ENCODE measurements at regions of chr12 and their contacts with region 1.

Region 1: DNA sequence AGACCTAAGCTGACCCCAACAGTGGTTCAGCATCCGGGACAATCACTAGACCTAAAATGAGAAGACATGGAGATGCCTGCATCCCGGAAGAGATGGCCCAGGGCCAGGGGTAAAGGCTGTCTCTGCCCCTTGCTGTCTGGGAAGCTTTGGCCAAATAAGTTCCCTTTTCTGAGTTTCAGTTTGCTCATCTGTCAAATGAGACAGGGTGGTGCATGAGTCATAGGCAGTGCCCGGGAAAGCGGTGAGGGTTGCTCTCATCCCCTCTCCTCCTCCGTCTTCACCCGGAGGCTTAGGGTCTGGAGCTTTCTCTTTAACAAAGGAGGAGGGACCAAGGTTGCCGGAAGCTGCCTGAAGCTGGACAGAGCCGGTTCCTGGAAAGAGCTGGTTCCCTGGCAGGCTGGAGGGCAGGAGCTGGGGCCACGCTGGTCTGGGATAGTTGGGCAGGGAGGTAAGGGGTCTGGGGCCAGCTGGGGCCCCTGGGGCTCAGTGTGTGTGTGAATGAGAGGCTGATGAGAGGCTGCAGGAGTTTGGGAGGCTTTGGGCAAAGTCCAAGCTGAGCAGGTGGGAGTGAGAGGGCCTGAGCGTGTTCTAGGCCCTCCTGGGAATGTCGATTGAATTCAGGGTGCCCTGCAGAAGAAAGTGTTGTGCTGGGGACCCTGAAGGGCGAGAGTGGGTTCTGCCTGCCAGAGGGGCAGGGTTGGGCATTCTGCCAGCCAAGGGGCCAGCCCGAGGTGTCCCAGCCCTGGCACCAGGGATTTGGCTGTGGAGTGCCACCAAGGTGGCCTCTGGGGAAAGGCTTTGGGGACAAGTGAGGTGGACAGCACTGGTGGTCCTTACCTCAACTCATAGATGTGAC is at the start of gene SDSL:
- DNase-seq: peak; percentile 97 to 99 (median 98)
- H3K4me3 ChIP-seq: peak within 1 kb of the TSS; percentile 16 to 72 (median 41)
- H3K4me3 Mint-ChIP-seq: peak within 1 kb of the TSS; percentile 92 to 98
- H3K27ac ChIP-seq: peak within 1 kb of the TSS; percentile 83 to 88
- H3K27ac Mint-ChIP-seq: peak within 1 kb of the TSS; percentile 95 to 99 (median 98)
- H3K4me1 ChIP-seq: peaks cover 30 to 45% of the 10 kb centered on the region in 2 donors
- H3K4me1 Mint-ChIP-seq: peaks cover 52% of the 10 kb centered on the region
- H3K27me3 ChIP-seq: no peaks in the 10 kb centered on the region
- H3K27me3 Mint-ChIP-seq: no peaks in the 10 kb centered on the region
- CTCF ChIP-seq: no peak
- polyA plus RNA-seq, gene SDSL: 4.6 to 10.0 (median 6.5) TPM

Region 2: GRCh38 chr12:113208041-113208934 is 214.0 kb before region 1 on chr12:
- intact Hi-C with region 1: loop called (anchors 10 kb)
- DNase-seq: peak; percentile 85 to 94 (median 91)
- H3K4me3 ChIP-seq: peak overlapping the region in 1 of 3 experiments; percentile 50
- H3K4me3 Mint-ChIP-seq: peak overlapping the region; percentile 53 to 82
- H3K27ac ChIP-seq: peak overlapping the region; percentile 76 to 89
- H3K27ac Mint-ChIP-seq: peak overlapping the region; percentile 98 to 100 (median 99)
- H3K4me1 ChIP-seq: peaks cover 89 to 99% of the 10 kb centered on the region in 2 donors
- H3K4me1 Mint-ChIP-seq: peaks cover 81% of the 10 kb centered on the region
- H3K27me3 ChIP-seq: no peaks in the 10 kb centered on the region
- H3K27me3 Mint-ChIP-seq: peaks cover 0 to 8% (median 0%) of the 10 kb centered on the region in 3 donors
- CTCF ChIP-seq: no peak

Region 3: DNA sequence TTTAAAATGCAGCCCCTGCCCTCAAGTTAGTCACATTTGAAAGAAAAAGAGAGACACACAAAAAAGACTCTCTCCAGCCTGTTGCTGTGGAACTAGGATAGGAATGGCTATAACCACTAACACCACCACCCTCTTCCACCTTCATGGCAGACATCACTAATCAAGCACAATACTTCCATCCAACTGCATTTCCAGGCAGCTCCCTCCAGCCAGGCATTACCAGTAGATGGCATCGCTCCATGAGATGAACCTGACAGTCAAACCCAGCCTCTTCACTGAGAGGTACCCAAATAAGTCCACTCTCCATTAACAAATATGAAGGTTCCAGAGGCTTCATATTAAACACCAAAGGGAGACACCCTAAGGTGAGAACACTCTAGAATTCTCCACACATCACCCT is 111.8 kb before region 1 on chr12:
- intact Hi-C with region 1: loop called (anchors 5 kb)
- DNase-seq: no peak
- H3K4me3 ChIP-seq: no peak overlapping the region
- H3K4me3 Mint-ChIP-seq: no peak overlapping the region
- H3K27ac ChIP-seq: no peak overlapping the region
- H3K27ac Mint-ChIP-seq: peak overlapping the region in 1 of 7 donors; percentile 25
- H3K4me1 ChIP-seq: no peaks in the 10 kb centered on the region
- H3K4me1 Mint-ChIP-seq: no peaks in the 10 kb centered on the region
- H3K27me3 ChIP-seq: no peaks in the 10 kb centered on the region
- H3K27me3 Mint-ChIP-seq: peaks cover 0 to 2% (median 2%) of the 10 kb centered on the region in 3 donors
- CTCF ChIP-seq: no peak

Region 4: GRCh38 chr12:113334786-113335540 is 87.3 kb before region 1 on chr12 and contains the start of gene SLC8B1:
- intact Hi-C with region 1: loop called in 1 of 2 experiments (anchors 2 kb)
- DNase-seq: peak; percentile 68 to 86 (median 79)
- H3K4me3 ChIP-seq: peak within 1 kb of the TSS; percentile 74 to 93 (median 75)
- H3K4me3 Mint-ChIP-seq: peak within 1 kb of the TSS; percentile 96 to 98
- H3K27ac ChIP-seq: peak within 1 kb of the TSS; percentile 72 to 88
- H3K27ac Mint-ChIP-seq: peak within 1 kb of the TSS; percentile 90 to 98 (median 93)
- H3K4me1 ChIP-seq: peaks cover 28 to 44% of the 10 kb centered on the region in 2 donors
- H3K4me1 Mint-ChIP-seq: peaks cover 43% of the 10 kb centered on the region
- H3K27me3 ChIP-seq: no peaks in the 10 kb centered on the region
- H3K27me3 Mint-ChIP-seq: peaks cover 0 to 2% (median 0%) of the 10 kb centered on the region in 3 donors
- CTCF ChIP-seq: no peak
- polyA plus RNA-seq, gene SLC8B1: 21.6 to 46.0 (median 32.4) TPM

Region 5: GRCh38 chr12:113358381-113359132 is 63.7 kb before region 1 on chr12 and contains the start of gene PLBD2:
- intact Hi-C with region 1: loop called in 1 of 2 experiments (anchors 5 kb)
- DNase-seq: peak; percentile 89 to 93 (median 90)
- H3K4me3 ChIP-seq: peak within 1 kb of the TSS; percentile 68 to 90 (median 86)
- H3K4me3 Mint-ChIP-seq: peak within 1 kb of the TSS; percentile 91 to 92
- H3K27ac ChIP-seq: peak within 1 kb of the TSS; percentile 69 to 82
- H3K27ac Mint-ChIP-seq: peak within 1 kb of the TSS; percentile 90 to 97 (median 94)
- H3K4me1 ChIP-seq: peaks cover 32 to 33% of the 10 kb centered on the region in 2 donors
- H3K4me1 Mint-ChIP-seq: peaks cover 34% of the 10 kb centered on the region
- H3K27me3 ChIP-seq: no peaks in the 10 kb centered on the region
- H3K27me3 Mint-ChIP-seq: peaks cover 0 to 5% (median 4%) of the 10 kb centered on the region in 3 donors
- CTCF ChIP-seq: no peak
- polyA plus RNA-seq, gene PLBD2: 8.5 to 12.4 (median 8.8) TPM

Region 6: GRCh38 chr12:113385282-113385882 is 36.9 kb before region 1 on chr12:
- intact Hi-C with region 1: loop called (anchors 5 kb)
- DNase-seq: no peak
- H3K4me3 ChIP-seq: no peak overlapping the region
- H3K4me3 Mint-ChIP-seq: no peak overlapping the region
- H3K27ac ChIP-seq: no peak overlapping the region
- H3K27ac Mint-ChIP-seq: peak overlapping the region in 1 of 7 donors; percentile 42
- H3K4me1 ChIP-seq: no peaks in the 10 kb centered on the region
- H3K4me1 Mint-ChIP-seq: no peaks in the 10 kb centered on the region
- H3K27me3 ChIP-seq: no peaks in the 10 kb centered on the region
- H3K27me3 Mint-ChIP-seq: peaks cover 0 to 2% (median 2%) of the 10 kb centered on the region in 3 donors
- CTCF ChIP-seq: no peak

Region 7: GRCh38 chr12:113392988-113393579 is 29.2 kb before region 1 on chr12:
- intact Hi-C with region 1: loop called (anchors 5 kb)
- DNase-seq: no peak
- H3K4me3 ChIP-seq: no peak overlapping the region
- H3K4me3 Mint-ChIP-seq: no peak overlapping the region
- H3K27ac ChIP-seq: no peak overlapping the region
- H3K27ac Mint-ChIP-seq: no peak overlapping the region
- H3K4me1 ChIP-seq: no peaks in the 10 kb centered on the region
- H3K4me1 Mint-ChIP-seq: no peaks in the 10 kb centered on the region
- H3K27me3 ChIP-seq: no peaks in the 10 kb centered on the region
- H3K27me3 Mint-ChIP-seq: peaks cover 5 to 10% (median 6%) of the 10 kb centered on the region in 3 donors
- CTCF ChIP-seq: no peak